Vagina (tissue), 2 donors: ENCODE measurements at regions of chr3 and their contacts with region 1.

Region 1: GRCh38 chr3:170317954-170318353 is 39.6 kb upstream of the SKIL start:
- DNase-seq: no peak
- H3K4me3 ChIP-seq: no peak overlapping the region
- H3K27ac ChIP-seq: no peak overlapping the region
- H3K4me1 ChIP-seq: no peaks in the 10 kb centered on the region
- H3K27me3 ChIP-seq: no peaks in the 10 kb centered on the region
- CTCF ChIP-seq: no peak
- POLR2A ChIP-seq: no peak

Region 2: DNA sequence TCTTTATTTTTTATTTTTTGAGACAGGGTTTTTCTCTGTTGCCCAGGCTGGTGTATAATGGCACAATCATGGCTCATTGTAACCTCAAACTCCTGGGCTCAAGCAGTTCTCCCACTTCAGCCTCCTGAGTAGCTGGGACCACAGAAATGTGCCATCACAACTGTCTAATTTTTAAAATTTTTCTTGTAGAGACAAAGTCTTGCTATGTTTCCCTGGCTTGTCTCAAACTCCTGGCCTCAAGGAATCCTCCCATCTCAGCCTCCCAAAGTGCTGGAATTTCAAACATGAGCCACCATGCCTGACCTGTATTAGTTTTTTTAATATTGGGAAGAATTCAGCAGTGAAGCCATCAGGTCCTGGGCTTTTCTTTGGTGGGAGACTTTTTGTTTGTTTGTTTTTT is 87.1 kb after region 1 on chr3:
- intact Hi-C with region 1: loop called (anchors 10 kb)
- DNase-seq: no peak
- H3K4me3 ChIP-seq: no peak overlapping the region
- H3K27ac ChIP-seq: no peak overlapping the region
- H3K4me1 ChIP-seq: no peaks in the 10 kb centered on the region
- H3K27me3 ChIP-seq: no peaks in the 10 kb centered on the region
- CTCF ChIP-seq: no peak
- POLR2A ChIP-seq: no peak